Activated CD8-positive, alpha-beta memory T cell treated with anti-CD3 and anti-CD28 coated beads, Interleukin-2, amount 10 ng/mL, durations not matched to agents 7 days and 5 days (primary cell): ENCODE measurements at regions of chr2 and their contacts with region 1.

Region 1: GRCh38 chr2:85302121-85302520 is 25.7 kb downstream of the TGOLN2 start:
- DNase-seq: no peak
- ATAC-seq: no peak
- H3K4me3 Mint-ChIP-seq: no peak overlapping the region
- H3K27ac Mint-ChIP-seq: no peak overlapping the region
- H3K4me1 Mint-ChIP-seq: peaks cover 7% of the 10 kb centered on the region
- H3K27me3 Mint-ChIP-seq: peaks cover 29% of the 10 kb centered on the region

Region 2: GRCh38 chr2:85066874-85067351 is 235.2 kb before region 1 on chr2:
- CTCF ChIA-PET with region 1: interaction called, 15 read pairs
- DNase-seq: peak; percentile 65
- ATAC-seq: peak; percentile 61
- H3K4me3 Mint-ChIP-seq: no peak overlapping the region
- H3K27ac Mint-ChIP-seq: no peak overlapping the region
- H3K4me1 Mint-ChIP-seq: peaks cover 2% of the 10 kb centered on the region
- H3K27me3 Mint-ChIP-seq: peaks cover 19% of the 10 kb centered on the region